Activated B cell treated with CpG ODN at 0.5 μM for 24 hours (primary cell): ENCODE measurements at regions of chr15 and their contacts with region 1.

Region 1: GRCh38 chr15:89057504-89058133 is 30.6 kb upstream of the ABHD2 start:
- DNase-seq: peak; percentile 69
- ATAC-seq: peak; percentile 87
- H3K4me3 Mint-ChIP-seq: no peak overlapping the region
- H3K27ac Mint-ChIP-seq: no peak overlapping the region
- H3K4me1 Mint-ChIP-seq: peaks cover 2% of the 10 kb centered on the region
- H3K27me3 Mint-ChIP-seq: peaks cover 6% of the 10 kb centered on the region
- CTCF ChIP-seq: no peak

Region 2: DNA sequence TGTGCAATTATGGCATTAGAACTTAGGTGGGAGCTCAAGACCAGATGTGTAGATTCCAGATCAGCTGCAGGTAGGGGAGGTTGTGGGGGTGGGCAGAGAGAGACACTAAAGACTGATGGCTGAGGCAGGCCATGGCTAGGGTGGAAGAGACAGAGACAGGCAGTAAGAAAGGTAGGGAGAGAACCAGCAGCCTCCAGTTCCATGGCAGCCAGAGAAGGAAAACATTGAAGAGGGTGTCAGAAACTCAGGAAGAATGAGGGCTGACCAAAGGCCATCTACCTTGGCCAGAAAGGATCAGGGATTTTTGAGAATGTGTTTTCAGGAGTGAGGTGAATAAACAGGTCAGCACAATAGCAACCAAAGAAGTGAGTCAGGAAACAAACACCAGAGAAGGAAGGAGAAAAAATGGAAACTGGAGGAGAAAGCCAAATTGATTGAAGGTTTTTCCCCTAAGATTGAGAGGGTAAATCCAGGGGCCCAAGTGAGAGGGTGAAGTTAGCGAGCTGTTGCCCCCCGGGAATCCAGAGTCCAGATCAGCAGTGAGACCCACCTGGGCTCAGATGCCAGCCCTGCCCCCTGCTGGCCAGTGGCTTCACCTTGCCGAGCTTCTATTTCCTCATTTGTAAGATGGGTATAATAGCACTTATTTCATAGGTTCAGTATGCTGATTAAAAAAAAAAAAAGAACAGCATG is 71.7 kb after region 1 on chr15:
- CTCF ChIA-PET with region 1: interaction called, 23 read pairs
- POLR2A ChIA-PET with region 1: interaction called, 4 read pairs
- intact Hi-C with region 1: loop called (anchors 1 kb)
- DNase-seq: peak; percentile 45
- ATAC-seq: peak; percentile 64
- H3K4me3 Mint-ChIP-seq: no peak overlapping the region
- H3K27ac Mint-ChIP-seq: no peak overlapping the region
- H3K4me1 Mint-ChIP-seq: peaks cover 14% of the 10 kb centered on the region
- H3K27me3 Mint-ChIP-seq: no peaks in the 10 kb centered on the region
- CTCF ChIP-seq: peak; percentile 60

Region 3: GRCh38 chr15:89177633-89178306 is 120.2 kb after region 1 on chr15:
- CTCF ChIA-PET with region 1: interaction called, 32 read pairs
- POLR2A ChIA-PET with region 1: no interaction called
- intact Hi-C with region 1: loop called (anchors 1 kb)
- DNase-seq: no peak
- ATAC-seq: no peak
- H3K4me3 Mint-ChIP-seq: no peak overlapping the region
- H3K27ac Mint-ChIP-seq: no peak overlapping the region
- H3K4me1 Mint-ChIP-seq: peaks cover 2% of the 10 kb centered on the region
- H3K27me3 Mint-ChIP-seq: no peaks in the 10 kb centered on the region
- CTCF ChIP-seq: no peak